Cardiac septum (tissue), 1 donor: ENCODE measurements at regions of chr11 and their contacts with region 1.

Region 1: GRCh38 chr11:95330302-95330701 is 99.3 kb upstream of the SESN3 start:
- DNase-seq: no peak

Region 2: GRCh38 chr11:95193541-95193940 is 136.8 kb before region 1 on chr11:
- intact Hi-C with region 1: no loop called
- DNase-seq: no peak

Region 3: GRCh38 chr11:95256321-95256779 is 74.0 kb before region 1 on chr11:
- intact Hi-C with region 1: loop called (anchors 5 kb)
- DNase-seq: no peak

Region 4: DNA sequence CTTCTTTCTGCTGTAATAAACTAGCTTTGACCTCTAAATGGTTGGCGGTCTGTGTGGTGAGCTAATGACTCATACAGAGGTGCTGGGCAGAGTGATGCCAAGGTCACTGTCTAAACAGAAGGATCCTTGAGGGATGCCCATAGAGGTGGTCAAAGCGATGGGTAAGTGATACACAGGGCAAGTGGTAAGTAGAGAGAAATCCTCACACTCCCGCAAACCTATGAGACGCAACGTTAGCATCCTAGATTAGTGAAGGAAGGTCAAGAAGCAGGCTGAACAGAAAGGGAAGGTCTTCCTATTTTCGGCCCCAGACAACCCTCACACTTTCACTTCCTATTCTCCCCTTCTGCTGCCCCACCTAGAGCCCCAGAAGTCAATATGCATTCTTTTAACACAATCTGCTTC is 33.7 kb before region 1 on chr11:
- intact Hi-C with region 1: no loop called
- DNase-seq: no peak

Region 5: DNA sequence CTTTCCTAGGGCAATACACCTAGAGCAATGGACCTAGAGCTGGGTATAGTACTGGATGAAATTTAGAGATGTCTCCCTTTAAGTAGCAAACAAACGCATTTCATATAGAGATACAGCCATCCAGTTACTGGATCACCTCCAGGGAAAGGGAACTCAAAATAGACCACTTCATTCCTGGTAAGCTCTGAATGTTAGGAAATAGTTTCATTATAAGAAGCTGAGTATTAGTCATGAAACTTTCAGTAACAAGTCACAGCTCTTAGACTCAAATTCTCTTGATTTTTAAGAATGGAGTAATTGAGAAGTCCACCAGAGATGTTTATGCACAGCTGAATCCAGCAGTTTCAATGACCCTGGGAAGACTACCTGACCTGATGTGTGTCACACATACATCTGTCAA is 237.4 kb after region 1 on chr11:
- intact Hi-C with region 1: no loop called
- DNase-seq: no peak

Region 6: DNA sequence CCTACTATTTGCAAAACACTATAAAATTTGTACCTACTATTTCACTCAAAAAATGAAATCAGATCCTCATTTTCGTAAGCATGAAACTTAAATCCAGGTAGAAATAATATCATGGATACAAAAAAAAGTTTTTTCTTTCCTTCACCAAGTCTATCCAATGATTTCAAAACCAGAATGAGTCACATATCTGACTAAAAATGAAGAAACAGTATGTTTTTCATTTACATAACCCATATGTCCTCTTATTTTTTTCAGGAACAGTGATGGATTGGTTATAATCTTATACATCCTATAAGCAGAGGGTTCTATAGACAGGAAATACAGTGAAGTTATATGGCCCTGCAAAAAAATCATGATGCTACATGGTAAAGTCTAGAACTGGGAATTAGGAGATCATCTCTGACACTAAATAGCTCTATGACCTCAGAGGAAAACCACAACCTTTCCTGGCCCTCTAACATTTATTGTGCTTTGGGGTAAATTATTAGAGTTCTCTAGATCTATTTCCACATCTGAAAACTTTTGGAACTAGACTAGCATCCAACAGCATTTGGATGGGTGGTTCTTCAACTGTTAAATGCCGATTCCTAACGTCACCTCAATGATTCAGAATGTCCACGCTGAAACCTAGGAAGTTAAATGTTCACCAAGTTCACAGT is 582.7 kb after region 1 on chr11:
- intact Hi-C with region 1: no loop called
- DNase-seq: no peak